SK-N-SH (cell line): ENCODE measurements at regions of chr11 and their contacts with region 1.

Region 1: GRCh38 chr11:116732271-116733042 is 40.3 kb downstream of the BUD13 start:
- DNase-seq: peak; percentile 86
- H3K4me3 ChIP-seq: no peak overlapping the region
- H3K27ac ChIP-seq: no peak overlapping the region
- H3K4me1 ChIP-seq: peaks cover 0 to 17% of the 10 kb centered on the region in 2 experiments; a peak in 1 of 4 replicates
- H3K27me3 ChIP-seq: no peaks in the 10 kb centered on the region
- CTCF ChIP-seq: peak; percentile 78
- EP300 ChIP-seq: no peak
- RAD21 ChIP-seq: peak; percentile 67

Region 2: DNA sequence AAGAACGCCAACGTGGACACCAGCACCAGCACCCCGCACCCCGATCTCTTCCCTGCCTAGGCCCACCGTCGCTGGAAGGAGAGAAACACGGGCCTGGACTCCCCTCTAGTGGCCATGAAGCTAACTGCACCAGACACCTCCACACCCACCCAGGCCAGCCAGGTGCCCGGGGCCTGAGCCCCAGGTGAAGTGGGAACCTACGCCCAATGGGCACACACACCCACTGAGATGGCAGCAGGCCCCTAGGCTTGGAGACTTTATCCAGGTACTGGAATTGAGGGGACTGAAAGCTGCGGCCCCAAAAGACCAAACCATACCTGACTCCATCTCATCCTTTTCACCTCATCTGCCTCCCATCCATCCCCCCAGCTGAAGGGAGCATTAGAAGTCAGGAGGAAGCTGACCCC is 40.7 kb before region 1 on chr11:
- CTCF ChIA-PET with region 1: interaction called, 15 read pairs
- POLR2A ChIA-PET with region 1: no interaction called
- DNase-seq: peak; percentile 91
- H3K4me3 ChIP-seq: peak overlapping the region in 1 of 2 experiments; percentile 24; a peak in 1 of 4 replicates
- H3K27ac ChIP-seq: no peak overlapping the region
- H3K4me1 ChIP-seq: peaks cover 0 to 18% of the 10 kb centered on the region in 2 experiments; a peak in 1 of 4 replicates
- H3K27me3 ChIP-seq: no peaks in the 10 kb centered on the region
- CTCF ChIP-seq: peak; percentile 91
- EP300 ChIP-seq: no peak
- RAD21 ChIP-seq: peak; percentile 94

Region 3: DNA sequence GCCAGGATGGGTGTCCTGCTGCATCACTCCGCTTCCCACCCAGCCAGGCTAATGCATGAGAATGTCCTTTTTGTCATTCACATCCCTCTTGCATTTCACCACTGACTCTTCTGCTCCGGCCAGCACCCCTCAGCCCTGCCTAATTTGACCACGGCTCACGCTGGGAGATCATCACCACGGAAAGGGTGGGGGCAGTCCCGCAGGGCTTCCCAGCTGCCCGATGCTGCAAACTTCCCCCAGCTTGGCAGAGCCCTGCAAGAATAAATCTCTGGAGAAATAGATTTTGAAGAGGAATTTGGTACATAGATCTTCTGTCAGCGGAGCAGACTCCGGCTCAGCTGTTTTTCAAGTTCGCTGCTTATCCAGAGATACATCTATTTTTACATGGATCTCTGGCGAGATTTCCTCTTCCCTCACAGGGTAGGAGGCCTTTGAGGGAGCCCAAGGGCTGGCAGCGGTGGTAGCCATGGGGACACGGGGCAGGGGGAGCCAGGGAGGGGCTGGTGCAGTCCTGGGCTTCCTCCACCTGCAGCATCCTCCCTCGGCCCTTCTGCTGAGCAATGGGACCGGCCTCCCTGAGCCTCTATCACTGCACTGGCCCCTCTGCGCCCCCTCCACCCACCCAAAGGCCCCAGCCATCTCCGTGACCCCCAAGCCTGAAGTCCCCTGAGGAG is 22.3 kb before region 1 on chr11:
- CTCF ChIA-PET with region 1: interaction called, 60 read pairs
- POLR2A ChIA-PET with region 1: no interaction called
- DNase-seq: no peak
- H3K4me3 ChIP-seq: no peak overlapping the region
- H3K27ac ChIP-seq: no peak overlapping the region
- H3K4me1 ChIP-seq: no peaks in the 10 kb centered on the region; a peak in 1 of 4 replicates
- H3K27me3 ChIP-seq: no peaks in the 10 kb centered on the region; the same call in 1 of the 2 replicates
- CTCF ChIP-seq: no peak
- EP300 ChIP-seq: no peak
- RAD21 ChIP-seq: no peak

Region 4: GRCh38 chr11:116721988-116722387 is 10.5 kb before region 1 on chr11:
- CTCF ChIA-PET with region 1: interaction called, 35 read pairs
- POLR2A ChIA-PET with region 1: no interaction called
- DNase-seq: no peak
- H3K4me3 ChIP-seq: no peak overlapping the region
- H3K27ac ChIP-seq: no peak overlapping the region
- H3K4me1 ChIP-seq: peaks cover 0 to 5% of the 10 kb centered on the region in 2 experiments; a peak in 1 of 4 replicates
- H3K27me3 ChIP-seq: peaks cover 22% of the 10 kb centered on the region; the same call in 1 of the 2 replicates
- CTCF ChIP-seq: no peak
- EP300 ChIP-seq: no peak
- RAD21 ChIP-seq: no peak

Region 5: GRCh38 chr11:116879800-116880625 is 147.6 kb after region 1 on chr11:
- CTCF ChIA-PET with region 1: no interaction called
- POLR2A ChIA-PET with region 1: no interaction called
- DNase-seq: peak; percentile 58
- H3K4me3 ChIP-seq: no peak overlapping the region; a peak in 1 of 4 replicates
- H3K27ac ChIP-seq: no peak overlapping the region; a peak in 1 of 4 replicates
- H3K4me1 ChIP-seq: no peaks in the 10 kb centered on the region; a peak in 2 of 4 replicates
- H3K27me3 ChIP-seq: no peaks in the 10 kb centered on the region
- CTCF ChIP-seq: peak; percentile 86
- EP300 ChIP-seq: no peak
- RAD21 ChIP-seq: peak; percentile 86

Region 6: DNA sequence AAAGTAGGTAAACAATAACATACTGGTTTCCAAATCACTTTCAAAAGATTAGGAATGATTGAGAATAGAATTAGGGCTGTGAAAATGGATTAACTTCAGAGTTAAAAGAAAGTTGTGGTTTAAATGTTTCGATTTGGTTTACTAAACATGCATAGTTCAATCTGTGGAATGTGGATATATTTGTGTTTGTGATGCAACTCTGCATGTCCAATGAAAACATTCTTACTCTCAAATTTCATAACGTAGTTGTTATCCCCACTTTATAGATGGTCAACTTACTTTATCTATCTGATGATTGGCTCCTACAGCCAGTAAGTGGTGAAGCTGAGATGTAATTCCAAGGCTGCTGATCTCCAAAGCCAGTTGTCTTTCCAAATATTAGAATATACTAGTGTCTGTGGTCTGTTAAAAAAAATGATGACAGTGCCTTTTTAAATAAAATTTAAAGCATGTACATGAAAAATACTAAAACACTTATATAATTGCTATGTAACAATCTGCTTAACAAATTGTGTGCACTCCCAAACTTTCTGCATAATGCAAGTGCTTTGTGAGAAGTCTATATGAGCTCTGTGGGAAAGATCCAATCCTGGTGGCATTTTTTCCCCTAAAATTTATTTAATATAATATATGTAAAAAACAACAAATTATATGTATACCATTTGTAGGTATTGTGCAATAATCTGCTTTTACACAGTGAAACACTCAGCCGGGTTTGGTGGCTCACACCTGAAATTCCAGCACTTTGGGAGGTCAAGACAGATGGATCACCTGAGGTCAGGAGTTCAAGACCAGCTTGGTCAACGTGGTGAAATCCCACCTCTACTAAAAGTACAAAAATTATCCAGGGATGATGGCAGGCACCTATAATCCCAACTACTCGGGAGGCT is 375.5 kb after region 1 on chr11:
- CTCF ChIA-PET with region 1: interaction called, 13 read pairs
- POLR2A ChIA-PET with region 1: no interaction called
- DNase-seq: no peak
- H3K4me3 ChIP-seq: no peak overlapping the region
- H3K27ac ChIP-seq: no peak overlapping the region
- H3K4me1 ChIP-seq: no peaks in the 10 kb centered on the region
- H3K27me3 ChIP-seq: no peaks in the 10 kb centered on the region
- CTCF ChIP-seq: no peak
- EP300 ChIP-seq: no peak
- RAD21 ChIP-seq: no peak